ENCODE measurements at regions of chr20 and their contacts with region 1.

Region 1: DNA sequence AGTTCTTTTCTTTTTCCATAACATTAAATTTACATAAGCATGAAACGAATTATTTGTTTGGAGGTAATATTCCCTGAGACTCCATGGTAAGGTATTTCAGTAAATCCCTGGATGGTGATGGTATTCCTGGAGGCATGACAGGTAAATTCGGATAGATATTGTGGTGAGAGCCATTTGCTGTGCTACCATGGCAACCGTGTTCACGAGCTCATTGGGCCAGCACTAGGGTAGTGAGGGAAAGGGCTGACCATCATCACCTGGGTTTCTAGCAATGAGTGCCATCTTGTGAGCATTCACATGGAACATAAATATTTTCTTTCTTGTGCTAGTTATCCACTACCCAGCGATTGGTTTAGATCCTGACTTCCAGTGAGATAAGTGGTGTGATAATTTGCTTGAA is 51.9 kb upstream of the GNRH2 start:
- DNase-seq: no peak
- ATAC-seq: no peak
- H3K4me3 ChIP-seq: no peak overlapping the region
- H3K27ac ChIP-seq: no peak overlapping the region
- H3K4me1 ChIP-seq: peaks cover 0 to 17% (median 0%) of the 10 kb centered on the region in 12 donors
- H3K27me3 ChIP-seq: no peaks in the 10 kb centered on the region
- CTCF ChIP-seq: no peak
- POLR2A ChIP-seq: no peak

Region 2: DNA sequence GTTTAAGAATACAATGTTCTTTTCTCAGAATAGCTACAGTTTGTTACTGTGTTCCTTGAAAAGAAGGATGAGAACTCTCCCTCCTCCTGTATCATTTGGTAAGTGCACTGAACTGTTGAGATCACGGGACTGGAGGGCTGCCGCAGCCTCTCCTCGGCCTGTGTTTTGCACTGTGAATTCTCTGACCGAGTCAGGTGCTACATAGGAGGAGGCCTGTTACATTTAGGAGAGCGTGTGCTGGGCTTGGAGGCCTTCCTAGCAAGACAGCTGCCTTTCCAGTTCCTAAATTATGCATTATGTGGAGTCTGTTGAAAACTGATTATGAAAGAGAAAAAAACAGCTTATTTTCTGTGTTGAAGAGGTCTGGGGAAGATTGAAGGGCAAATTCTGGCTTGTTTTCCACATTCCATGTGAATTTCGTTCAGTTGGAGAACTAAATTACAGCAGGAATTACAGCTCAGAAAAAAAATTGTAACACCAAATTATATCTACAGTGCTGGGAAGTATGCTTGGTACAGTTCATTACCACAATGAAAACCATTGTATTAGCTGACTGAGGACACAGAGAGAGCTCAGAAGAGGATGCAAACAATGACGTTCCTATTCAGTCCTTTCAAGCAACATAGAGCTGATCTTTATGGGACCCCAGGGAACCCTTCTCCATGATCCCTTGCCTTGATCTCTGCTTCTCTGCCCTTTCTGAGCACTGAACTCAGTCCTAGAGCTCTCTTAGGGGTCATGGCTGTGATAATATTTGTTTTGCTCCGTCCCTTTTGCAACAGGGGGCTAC is 452.4 kb before region 1 on chr20:
- intact Hi-C with region 1: loop called in 1 of 10 experiments (anchors 10 kb)
- DNase-seq: no peak
- ATAC-seq: no peak
- H3K4me3 ChIP-seq: no peak overlapping the region
- H3K27ac ChIP-seq: no peak overlapping the region
- H3K4me1 ChIP-seq: no peaks in the 10 kb centered on the region
- H3K27me3 ChIP-seq: peaks cover 0 to 57% (median 9%) of the 10 kb centered on the region in 9 donors
- CTCF ChIP-seq: no peak
- POLR2A ChIP-seq: no peak

Measured in heart left ventricle (tissue), 16 donors.